Psoas muscle (tissue), 8 donors: ENCODE measurements at regions of chr10 and their contacts with region 1.

Region 1: DNA sequence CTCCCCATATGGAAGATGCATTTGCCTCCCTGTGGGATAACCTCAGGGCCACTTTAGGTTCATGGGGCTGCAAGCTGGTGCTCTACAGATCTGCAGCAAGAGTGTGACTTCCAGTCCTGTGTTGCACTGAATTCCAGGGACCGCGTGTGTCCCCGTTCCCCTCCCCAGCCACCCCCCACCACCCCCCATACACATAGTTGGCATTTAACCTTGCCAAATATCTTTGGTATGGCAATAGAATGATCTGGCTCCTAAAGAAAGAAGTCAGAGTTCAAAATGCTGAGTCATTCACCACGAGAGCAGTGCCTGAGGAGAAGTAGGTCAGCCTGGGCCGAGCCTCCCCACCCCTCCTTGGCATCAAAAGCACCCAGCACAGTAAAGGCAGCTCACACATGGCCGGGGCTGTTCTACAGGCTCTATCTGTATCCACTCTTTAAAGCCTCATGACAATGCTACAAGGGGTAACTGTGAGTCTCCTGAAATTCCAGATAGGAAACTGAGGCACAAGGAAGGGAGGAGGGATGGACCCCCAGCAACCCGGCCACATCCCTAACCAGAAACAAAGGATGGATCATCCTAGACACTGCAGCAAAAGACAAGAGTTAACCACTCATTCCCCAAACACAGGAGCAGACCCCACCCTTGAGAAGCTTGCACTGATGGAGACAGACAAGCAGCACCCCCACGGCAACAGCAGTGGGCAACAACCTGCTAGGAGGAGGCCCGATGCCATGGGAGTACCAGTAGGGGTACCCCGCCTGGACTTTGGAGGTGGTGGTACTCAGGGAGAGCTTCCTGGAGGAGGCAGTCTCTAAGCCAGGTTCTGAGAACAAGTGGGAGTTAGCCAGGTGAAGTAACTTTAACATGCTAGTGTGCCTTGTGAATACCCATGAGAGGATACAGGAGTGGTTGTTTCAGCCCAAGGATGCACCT is 70.3 kb upstream of the NANOS1 start:
- DNase-seq: peak; percentile 63 to 84
- ATAC-seq: peak; percentile 92 to 97 (median 94)
- H3K4me3 ChIP-seq: no peak overlapping the region
- H3K27ac ChIP-seq: peak overlapping the region; percentile 76
- H3K4me1 ChIP-seq: peaks cover 29% of the 10 kb centered on the region
- H3K27me3 ChIP-seq: no peaks in the 10 kb centered on the region
- CTCF ChIP-seq: no peak

Region 2: GRCh38 chr10:119006451-119007210 is 47.4 kb after region 1 on chr10:
- intact Hi-C with region 1: loop called (anchors 5 kb)
- DNase-seq: peak; percentile 75 to 86
- ATAC-seq: peak; percentile 89 to 97 (median 96)
- H3K4me3 ChIP-seq: no peak overlapping the region
- H3K27ac ChIP-seq: peak overlapping the region; percentile 82
- H3K4me1 ChIP-seq: peaks cover 34% of the 10 kb centered on the region
- H3K27me3 ChIP-seq: no peaks in the 10 kb centered on the region
- CTCF ChIP-seq: no peak